CD8-positive, alpha-beta T cell (primary cell): ENCODE measurements at regions of chr22 and their contacts with region 1.

Region 1: GRCh38 chr22:39532215-39533071 is at the start of gene RPS19BP1:
- DNase-seq: peak; percentile 98 to 100 (median 99)
- ATAC-seq: peak; percentile 84
- H3K4me3 ChIP-seq: peak within 1 kb of the TSS; percentile 83 to 99
- H3K4me3 Mint-ChIP-seq: peak within 1 kb of the TSS; percentile 97
- H3K27ac ChIP-seq: peak within 1 kb of the TSS; percentile 78 to 97
- H3K27ac Mint-ChIP-seq: peak within 1 kb of the TSS; percentile 95
- H3K4me1 ChIP-seq: peaks cover 55% of the 10 kb centered on the region
- H3K4me1 Mint-ChIP-seq: peaks cover 56% of the 10 kb centered on the region
- H3K27me3 ChIP-seq: no peaks in the 10 kb centered on the region
- H3K27me3 Mint-ChIP-seq: no peaks in the 10 kb centered on the region
- CTCF ChIP-seq: no peak
- total RNA-seq, gene RPS19BP1: 69.0 to 70.5 TPM

Region 2: GRCh38 chr22:38901111-38901641 is 631.3 kb before region 1 on chr22:
- CTCF ChIA-PET with region 1: no interaction called
- POLR2A ChIA-PET with region 1: no interaction called
- intact Hi-C with region 1: no loop called
- DNase-seq: no peak
- ATAC-seq: no peak
- H3K4me3 ChIP-seq: no peak overlapping the region
- H3K4me3 Mint-ChIP-seq: no peak overlapping the region
- H3K27ac ChIP-seq: no peak overlapping the region
- H3K27ac Mint-ChIP-seq: no peak overlapping the region
- H3K4me1 ChIP-seq: peaks cover 12% of the 10 kb centered on the region
- H3K4me1 Mint-ChIP-seq: peaks cover 12% of the 10 kb centered on the region
- H3K27me3 ChIP-seq: no peaks in the 10 kb centered on the region
- H3K27me3 Mint-ChIP-seq: peaks cover 3% of the 10 kb centered on the region
- CTCF ChIP-seq: no peak

Region 3: DNA sequence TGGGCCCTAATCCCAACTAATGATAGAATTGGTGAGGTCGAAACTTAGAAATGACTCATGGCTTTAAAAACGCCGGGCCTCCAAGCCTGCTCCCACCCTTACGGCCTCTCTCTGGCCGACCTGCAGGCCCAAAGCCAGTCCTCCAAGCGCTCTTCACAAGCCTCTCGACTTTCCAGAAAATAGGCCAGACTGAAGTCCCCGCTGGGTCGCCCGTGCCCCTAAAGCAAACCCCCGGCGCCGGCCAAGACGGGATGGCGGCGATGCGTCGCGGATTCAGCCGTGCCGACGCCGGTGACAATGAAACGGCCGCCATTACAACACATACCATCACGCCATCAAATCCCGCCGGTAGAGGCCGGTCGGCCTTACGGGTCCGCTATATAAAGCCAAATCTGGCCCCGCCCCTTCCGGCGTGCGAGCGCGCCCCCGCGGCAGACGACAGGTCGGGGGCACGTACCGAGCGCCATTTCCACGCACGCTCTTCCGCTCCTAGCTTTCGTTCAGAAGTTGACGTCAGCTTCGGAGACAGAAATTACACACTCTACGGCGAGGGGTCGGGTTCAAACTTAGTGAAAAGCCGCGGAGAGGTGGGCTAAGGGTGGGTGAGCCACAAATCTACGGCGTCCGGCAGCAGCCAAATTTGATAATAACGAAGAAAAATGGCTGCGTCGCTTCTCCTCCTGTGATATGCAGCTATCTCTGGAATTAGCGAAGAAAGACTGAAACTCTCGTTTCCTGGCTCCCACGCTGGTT is 213.0 kb before region 1 on chr22 and contains the start of gene RPL3:
- CTCF ChIA-PET with region 1: interaction called, 35 read pairs
- POLR2A ChIA-PET with region 1: interaction called, 13 read pairs
- intact Hi-C with region 1: loop called (anchors 1 to 2 kb)
- DNase-seq: peak; percentile 96 to 100 (median 98)
- ATAC-seq: peak; percentile 85
- H3K4me3 ChIP-seq: peak within 1 kb of the TSS; percentile 91 to 99
- H3K4me3 Mint-ChIP-seq: peak within 1 kb of the TSS; percentile 96
- H3K27ac ChIP-seq: peak within 1 kb of the TSS; percentile 81 to 90
- H3K27ac Mint-ChIP-seq: peak within 1 kb of the TSS; percentile 96
- H3K4me1 ChIP-seq: peaks cover 45% of the 10 kb centered on the region
- H3K4me1 Mint-ChIP-seq: peaks cover 46% of the 10 kb centered on the region
- H3K27me3 ChIP-seq: no peaks in the 10 kb centered on the region
- H3K27me3 Mint-ChIP-seq: no peaks in the 10 kb centered on the region
- CTCF ChIP-seq: no peak
- total RNA-seq, gene RPL3: 3,777 to 3,874 TPM

Region 4: DNA sequence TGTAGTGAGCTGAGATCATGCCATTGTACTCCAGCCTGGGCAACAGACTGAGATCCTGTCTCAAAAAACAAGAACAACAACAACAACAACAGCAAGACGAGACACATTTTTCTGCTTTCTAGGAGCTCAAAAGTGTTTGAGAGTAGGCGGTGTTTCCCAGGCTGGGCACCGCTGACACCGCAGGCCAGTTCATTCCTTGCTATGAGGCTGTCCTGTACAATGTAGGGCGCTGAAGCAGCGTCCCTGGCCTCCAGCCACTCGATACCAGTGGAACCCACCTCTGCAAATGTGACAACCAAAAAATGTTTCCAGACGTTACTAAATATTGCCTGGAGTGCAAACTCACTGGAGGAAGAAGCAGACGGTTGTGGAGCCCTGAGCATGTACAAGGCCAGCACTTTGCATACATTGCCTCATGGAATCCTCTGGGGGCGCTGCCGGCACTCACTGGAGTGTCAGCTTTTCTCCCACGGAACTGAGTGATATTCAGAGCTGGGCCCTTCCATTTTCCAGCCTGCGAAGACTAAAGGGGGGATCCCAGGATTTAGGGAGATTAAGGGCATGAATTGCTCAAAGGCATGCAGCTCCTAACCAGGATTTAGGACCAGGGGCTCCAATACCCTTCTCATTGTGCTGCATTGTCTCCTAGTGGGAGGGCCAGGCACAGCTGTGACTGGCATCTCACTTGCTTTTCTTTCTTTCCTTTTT is 36.2 kb before region 1 on chr22:
- CTCF ChIA-PET with region 1: interaction called, 287 read pairs
- POLR2A ChIA-PET with region 1: interaction called, 13 read pairs
- intact Hi-C with region 1: loop called (anchors 1 kb)
- DNase-seq: peak in 8 of 9 experiments; percentile 28 to 63 (median 52)
- ATAC-seq: peak; percentile 75
- H3K4me3 ChIP-seq: no peak overlapping the region
- H3K4me3 Mint-ChIP-seq: no peak overlapping the region
- H3K27ac ChIP-seq: no peak overlapping the region
- H3K27ac Mint-ChIP-seq: no peak overlapping the region
- H3K4me1 ChIP-seq: no peaks in the 10 kb centered on the region
- H3K4me1 Mint-ChIP-seq: peaks cover 8% of the 10 kb centered on the region
- H3K27me3 ChIP-seq: no peaks in the 10 kb centered on the region
- H3K27me3 Mint-ChIP-seq: no peaks in the 10 kb centered on the region
- CTCF ChIP-seq: peak; percentile 71

Region 5: DNA sequence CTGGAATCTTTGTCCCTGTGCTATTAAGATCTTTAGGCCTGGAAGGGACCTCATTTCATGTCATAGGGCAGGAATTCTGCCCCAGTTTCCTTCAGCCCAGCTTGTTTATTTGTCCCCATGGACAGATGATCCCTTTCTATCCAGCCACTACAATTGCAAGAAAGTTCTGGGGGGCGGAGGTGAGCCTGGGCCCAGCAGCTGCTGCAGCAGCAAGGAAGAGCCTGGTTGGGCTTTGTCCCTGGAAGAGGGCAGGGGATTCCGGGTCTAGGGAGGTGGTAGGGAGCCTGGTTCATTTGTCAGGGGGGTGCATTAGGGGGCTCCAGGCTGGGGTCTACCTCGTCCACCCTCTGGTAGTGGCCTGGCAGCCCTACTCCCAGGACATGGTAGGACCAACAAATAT is 21.7 kb after region 1 on chr22:
- CTCF ChIA-PET with region 1: interaction called, 17 read pairs
- POLR2A ChIA-PET with region 1: no interaction called
- intact Hi-C with region 1: no loop called
- DNase-seq: no peak
- ATAC-seq: no peak
- H3K4me3 ChIP-seq: no peak overlapping the region
- H3K4me3 Mint-ChIP-seq: no peak overlapping the region
- H3K27ac ChIP-seq: no peak overlapping the region
- H3K27ac Mint-ChIP-seq: no peak overlapping the region
- H3K4me1 ChIP-seq: peaks cover 10% of the 10 kb centered on the region
- H3K4me1 Mint-ChIP-seq: peaks cover 6% of the 10 kb centered on the region
- H3K27me3 ChIP-seq: peaks cover 17 to 18% of the 10 kb centered on the region in 2 experiments
- H3K27me3 Mint-ChIP-seq: peaks cover 43% of the 10 kb centered on the region
- CTCF ChIP-seq: no peak

Region 6: GRCh38 chr22:39785232-39785631 is 252.8 kb after region 1 on chr22:
- CTCF ChIA-PET with region 1: no interaction called
- POLR2A ChIA-PET with region 1: no interaction called
- intact Hi-C with region 1: no loop called
- DNase-seq: no peak
- ATAC-seq: no peak
- H3K4me3 ChIP-seq: no peak overlapping the region
- H3K4me3 Mint-ChIP-seq: no peak overlapping the region
- H3K27ac ChIP-seq: no peak overlapping the region
- H3K27ac Mint-ChIP-seq: no peak overlapping the region
- H3K4me1 ChIP-seq: no peaks in the 10 kb centered on the region
- H3K4me1 Mint-ChIP-seq: peaks cover 7% of the 10 kb centered on the region
- H3K27me3 ChIP-seq: no peaks in the 10 kb centered on the region
- H3K27me3 Mint-ChIP-seq: no peaks in the 10 kb centered on the region
- CTCF ChIP-seq: no peak

Region 7: GRCh38 chr22:39946503-39947219 is 414.2 kb after region 1 on chr22:
- CTCF ChIA-PET with region 1: interaction called, 8 read pairs
- POLR2A ChIA-PET with region 1: interaction called, 5 read pairs
- intact Hi-C with region 1: loop called (anchors 2 kb)
- DNase-seq: peak in 1 of 9 experiments; percentile 40
- ATAC-seq: no peak
- H3K4me3 ChIP-seq: no peak overlapping the region
- H3K4me3 Mint-ChIP-seq: peak overlapping the region; percentile 66
- H3K27ac ChIP-seq: peak overlapping the region; percentile 4 to 52
- H3K27ac Mint-ChIP-seq: no peak overlapping the region
- H3K4me1 ChIP-seq: peaks cover 100% of the 10 kb centered on the region
- H3K4me1 Mint-ChIP-seq: peaks cover 98% of the 10 kb centered on the region
- H3K27me3 ChIP-seq: no peaks in the 10 kb centered on the region
- H3K27me3 Mint-ChIP-seq: no peaks in the 10 kb centered on the region
- CTCF ChIP-seq: no peak

Region 8: GRCh38 chr22:40346178-40347118 is 814.0 kb after region 1 on chr22 and contains the start of gene ADSL:
- CTCF ChIA-PET with region 1: interaction called, 27 read pairs
- POLR2A ChIA-PET with region 1: interaction called, 3 read pairs
- intact Hi-C with region 1: loop called (anchors 1 kb)
- DNase-seq: peak; percentile 60 to 91 (median 83)
- ATAC-seq: peak; percentile 76
- H3K4me3 ChIP-seq: peak within 1 kb of the TSS; percentile 73 to 90
- H3K4me3 Mint-ChIP-seq: peak within 1 kb of the TSS; percentile 97
- H3K27ac ChIP-seq: peak within 1 kb of the TSS; percentile 74 to 82
- H3K27ac Mint-ChIP-seq: peak within 1 kb of the TSS; percentile 99
- H3K4me1 ChIP-seq: peaks cover 45% of the 10 kb centered on the region
- H3K4me1 Mint-ChIP-seq: peaks cover 60% of the 10 kb centered on the region
- H3K27me3 ChIP-seq: no peaks in the 10 kb centered on the region
- H3K27me3 Mint-ChIP-seq: no peaks in the 10 kb centered on the region
- CTCF ChIP-seq: no peak
- total RNA-seq, gene ADSL: 61.8 to 68.7 TPM